Heart right ventricle (tissue), 16 donors: ENCODE measurements at regions of chr20 and their contacts with region 1.

Region 1: GRCh38 chr20:10864076-10864918 is 190.5 kb upstream of the JAG1 start:
- DNase-seq: peak in 1 of 2 donors; percentile 24
- ATAC-seq: peak; percentile 72 to 88 (median 80)
- H3K4me3 ChIP-seq: no peak overlapping the region
- H3K27ac ChIP-seq: peak overlapping the region; percentile 24 to 86 (median 70)
- H3K4me1 ChIP-seq: peaks cover 5 to 33% (median 19%) of the 10 kb centered on the region in 9 donors
- H3K27me3 ChIP-seq: no peaks in the 10 kb centered on the region
- CTCF ChIP-seq: no peak

Region 2: GRCh38 chr20:10536531-10536930 is 327.8 kb before region 1 on chr20:
- intact Hi-C with region 1: no loop called
- DNase-seq: no peak
- ATAC-seq: no peak
- H3K4me3 ChIP-seq: no peak overlapping the region
- H3K27ac ChIP-seq: no peak overlapping the region
- H3K4me1 ChIP-seq: peaks cover 0 to 14% (median 9%) of the 10 kb centered on the region in 9 donors
- H3K27me3 ChIP-seq: no peaks in the 10 kb centered on the region
- CTCF ChIP-seq: peak in 7 of 9 donors; percentile 14 to 45 (median 29)

Region 3: DNA sequence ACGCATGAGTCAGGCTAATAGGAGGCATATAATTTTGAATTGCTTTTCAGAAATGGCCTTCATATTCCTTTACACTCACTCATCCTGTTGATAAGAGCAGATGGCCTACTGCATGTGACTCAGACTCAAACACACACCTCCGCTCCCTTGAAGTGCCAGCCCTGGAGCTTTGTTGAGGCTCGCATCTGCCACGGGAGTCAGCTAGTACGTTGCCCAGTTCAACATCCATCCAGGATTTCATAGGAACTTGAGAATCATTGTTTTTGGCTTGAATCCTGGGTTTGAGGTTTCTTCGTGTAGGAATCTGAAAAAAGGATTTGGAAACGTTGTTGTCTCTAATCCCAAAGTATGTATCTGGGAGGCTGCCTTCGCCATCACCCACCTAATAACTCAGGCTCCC is 103.1 kb before region 1 on chr20:
- intact Hi-C with region 1: loop called in 1 of 10 experiments (anchors 5 kb)
- DNase-seq: no peak
- ATAC-seq: no peak
- H3K4me3 ChIP-seq: no peak overlapping the region
- H3K27ac ChIP-seq: peak overlapping the region in 1 of 10 donors; percentile 0
- H3K4me1 ChIP-seq: peaks cover 0 to 6% (median 0%) of the 10 kb centered on the region in 9 donors
- H3K27me3 ChIP-seq: no peaks in the 10 kb centered on the region
- CTCF ChIP-seq: no peak

Region 4: DNA sequence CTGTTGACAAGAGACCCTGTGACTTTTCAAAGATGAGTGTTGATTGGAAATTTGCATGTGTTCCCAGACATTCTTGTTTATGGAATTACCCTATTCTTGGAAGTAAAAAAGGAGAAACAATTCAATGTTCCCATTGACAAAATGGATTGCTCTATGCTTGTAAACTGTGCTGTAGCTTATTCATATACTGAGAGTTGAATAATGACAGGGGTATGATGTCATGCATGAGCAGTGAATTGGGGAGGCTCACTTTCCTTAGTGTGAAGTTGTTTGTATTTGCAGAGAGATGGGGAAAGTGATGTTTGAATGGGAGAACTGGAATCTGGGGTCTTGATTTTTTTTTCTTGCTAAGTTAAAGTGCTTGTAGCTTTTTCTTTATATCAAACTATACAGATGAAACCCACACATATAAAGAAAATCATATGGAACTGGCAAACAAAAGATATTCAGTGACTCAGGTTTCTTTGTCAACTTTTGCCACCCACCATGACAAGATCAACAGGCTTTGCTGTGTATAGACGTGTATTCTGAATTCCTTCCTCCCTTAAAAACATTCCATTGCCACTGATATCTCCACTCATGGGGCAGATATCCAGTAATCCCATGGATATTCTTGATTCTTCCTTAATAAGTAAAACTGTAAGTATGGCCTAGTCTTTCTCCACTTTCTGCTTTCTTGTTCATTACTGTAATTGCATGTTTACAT is 92.7 kb before region 1 on chr20:
- intact Hi-C with region 1: no loop called
- DNase-seq: no peak
- ATAC-seq: no peak
- H3K4me3 ChIP-seq: no peak overlapping the region
- H3K27ac ChIP-seq: no peak overlapping the region
- H3K4me1 ChIP-seq: no peaks in the 10 kb centered on the region
- H3K27me3 ChIP-seq: no peaks in the 10 kb centered on the region
- CTCF ChIP-seq: no peak

Region 5: DNA sequence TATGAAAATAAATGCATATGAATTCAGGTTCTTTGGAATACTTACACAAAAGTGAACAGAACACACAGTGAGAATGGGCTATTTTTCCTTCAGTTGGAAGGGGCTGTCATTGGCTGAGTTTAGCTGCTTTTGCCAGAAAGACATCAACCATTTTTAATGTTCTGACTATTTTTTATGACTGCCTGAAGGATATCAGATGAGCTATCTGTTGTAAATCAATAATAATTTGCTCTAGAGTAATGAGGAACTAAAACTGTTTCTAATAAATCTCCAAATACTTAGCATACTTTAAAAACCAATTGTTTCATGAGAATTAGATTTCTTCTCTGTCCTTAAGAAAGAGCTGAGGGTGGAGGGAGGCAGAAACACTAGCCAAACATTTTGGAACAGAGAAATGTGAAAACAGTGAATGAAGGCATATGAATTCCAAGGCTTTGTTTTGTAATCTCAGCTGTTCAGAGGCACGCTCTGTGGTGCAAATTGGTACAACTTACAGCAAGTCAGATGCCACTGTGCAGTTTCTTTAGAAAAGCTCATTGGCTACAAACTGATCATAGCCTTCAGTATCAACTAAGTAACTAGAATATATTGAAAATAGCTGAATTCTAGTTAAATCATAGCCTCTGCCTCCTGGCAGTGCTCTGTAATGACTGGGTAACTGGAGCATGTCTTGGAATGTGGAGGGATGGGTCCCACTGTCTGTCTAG is 38.4 kb after region 1 on chr20:
- intact Hi-C with region 1: loop called in 1 of 10 experiments (anchors 2 kb)
- DNase-seq: no peak
- ATAC-seq: peak in 1 of 8 donors; percentile 40
- H3K4me3 ChIP-seq: no peak overlapping the region
- H3K27ac ChIP-seq: peak overlapping the region in 1 of 10 donors; percentile 25
- H3K4me1 ChIP-seq: peaks cover 0 to 12% (median 0%) of the 10 kb centered on the region in 9 donors
- H3K27me3 ChIP-seq: no peaks in the 10 kb centered on the region
- CTCF ChIP-seq: no peak

Region 6: DNA sequence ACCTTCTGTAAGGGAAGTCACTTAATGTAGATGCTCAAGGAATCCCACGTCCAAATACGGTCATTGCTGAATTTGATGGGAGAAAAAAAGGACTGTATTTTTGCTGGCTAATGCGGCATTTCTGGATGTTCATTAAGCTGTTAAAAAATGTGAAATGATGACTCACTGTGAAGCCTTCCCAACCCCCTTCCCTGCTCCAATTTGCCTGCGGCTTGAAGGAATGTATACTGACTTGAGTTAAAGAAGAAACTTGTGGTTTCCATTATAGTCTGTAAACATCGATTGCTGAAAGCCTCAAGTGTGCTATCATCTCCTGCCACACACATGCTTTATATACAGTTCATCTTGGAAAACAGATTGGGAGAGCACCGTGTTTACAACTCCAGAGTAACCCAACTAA is 58.6 kb after region 1 on chr20:
- intact Hi-C with region 1: loop called in 1 of 10 experiments (anchors 10 kb)
- DNase-seq: no peak
- ATAC-seq: no peak
- H3K4me3 ChIP-seq: no peak overlapping the region
- H3K27ac ChIP-seq: no peak overlapping the region
- H3K4me1 ChIP-seq: peaks cover 0 to 11% (median 2%) of the 10 kb centered on the region in 9 donors
- H3K27me3 ChIP-seq: no peaks in the 10 kb centered on the region
- CTCF ChIP-seq: no peak